BJ (cell line): ENCODE measurements at regions of chr1 and their contacts with region 1.

Region 1: DNA sequence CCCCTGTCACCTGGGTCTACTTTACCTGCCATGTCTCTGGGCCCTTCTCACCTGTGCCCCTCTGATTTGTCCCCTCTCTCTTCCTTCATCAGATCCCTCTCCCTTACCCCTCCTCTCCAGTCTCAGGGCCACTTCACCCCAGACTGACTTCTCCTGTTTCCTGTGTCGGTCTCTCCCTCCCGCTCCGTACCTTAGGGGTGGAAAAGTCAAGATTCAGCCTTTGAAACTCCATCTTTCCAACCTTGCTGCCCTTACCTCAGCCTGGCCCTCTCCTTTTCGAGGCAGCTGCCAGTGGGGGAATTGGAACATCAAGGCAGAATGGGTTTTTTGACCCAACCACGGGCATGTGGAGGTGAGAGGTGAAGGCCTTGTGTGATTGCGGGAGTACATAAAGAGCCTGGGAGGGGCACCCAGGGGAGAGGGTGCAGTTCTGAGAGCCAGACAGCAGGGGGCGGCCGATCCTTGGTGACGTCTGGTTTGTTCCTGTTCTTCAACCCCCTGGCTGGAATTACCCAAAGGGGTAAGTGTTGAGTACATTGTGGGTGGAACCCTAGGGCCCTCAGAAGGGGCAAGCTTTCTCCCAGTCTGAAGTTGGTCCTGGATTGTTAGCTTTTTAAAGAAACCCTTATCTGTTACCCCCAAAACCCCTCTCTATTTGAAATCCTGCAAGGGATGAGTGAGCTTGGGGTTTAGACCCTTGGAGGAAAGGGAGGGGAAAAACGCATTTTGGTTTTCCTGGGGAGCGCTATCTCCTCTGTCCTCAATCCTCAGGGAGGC is 12.3 kb upstream of the DMBX1 start:
- DNase-seq: no peak
- H3K4me3 ChIP-seq: no peak overlapping the region
- H3K27me3 ChIP-seq: peaks cover 35% of the 10 kb centered on the region
- CTCF ChIP-seq: peak; percentile 95

Region 2: GRCh38 chr1:46487818-46488218 is 10.5 kb after region 1 on chr1:
- CTCF ChIA-PET with region 1: interaction called, 20 read pairs
- POLR2A ChIA-PET with region 1: no interaction called
- DNase-seq: no peak
- H3K4me3 ChIP-seq: no peak overlapping the region
- H3K27me3 ChIP-seq: peaks cover 76% of the 10 kb centered on the region
- CTCF ChIP-seq: peak; percentile 23; the same call in 1 of the 2 replicates

Region 3: DNA sequence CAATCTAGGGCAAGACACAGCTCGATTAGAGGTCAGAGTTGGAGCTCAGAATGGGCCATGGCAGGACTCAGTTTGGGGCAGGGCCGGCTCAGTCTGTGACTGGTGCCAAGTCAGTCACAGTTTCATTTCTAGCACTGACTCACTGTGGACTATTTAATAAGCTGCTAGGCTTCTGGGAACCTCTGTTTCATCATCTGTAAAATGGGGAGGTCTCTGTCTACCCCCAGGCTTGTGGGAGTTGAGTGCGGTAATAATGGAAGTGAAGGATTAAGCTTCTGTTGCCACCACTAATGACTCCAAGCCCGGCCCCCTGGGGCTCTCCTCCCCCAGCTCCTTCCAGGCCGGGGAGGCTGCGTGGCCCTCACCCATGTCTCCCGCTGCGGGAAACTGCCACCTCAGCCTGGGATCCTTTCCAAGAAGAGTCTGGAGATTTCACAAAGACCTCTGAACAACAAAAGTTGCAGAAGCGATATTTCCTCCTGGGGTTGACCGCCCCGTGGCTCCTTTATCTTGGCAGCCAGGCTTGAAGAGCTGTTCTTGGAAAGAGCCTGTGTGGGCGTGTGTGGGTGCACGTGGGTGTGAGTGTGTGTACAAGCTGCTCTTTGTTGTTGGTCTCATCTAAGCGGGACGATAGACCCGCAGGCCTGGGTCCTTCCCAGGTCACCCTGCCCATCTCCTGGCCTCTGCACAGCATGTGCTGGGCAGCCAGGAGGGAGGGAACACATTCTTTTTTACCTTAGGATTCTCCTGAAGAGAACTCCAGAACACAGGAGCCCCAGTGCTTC is 45.0 kb after region 1 on chr1:
- CTCF ChIA-PET with region 1: interaction called, 176 read pairs
- POLR2A ChIA-PET with region 1: no interaction called
- DNase-seq: no peak
- H3K4me3 ChIP-seq: no peak overlapping the region
- H3K27me3 ChIP-seq: peaks cover 18% of the 10 kb centered on the region
- CTCF ChIP-seq: no peak

Region 4: GRCh38 chr1:46533179-46533864 is 56.0 kb after region 1 on chr1:
- CTCF ChIA-PET with region 1: interaction called, 176 read pairs
- POLR2A ChIA-PET with region 1: no interaction called
- DNase-seq: no peak
- H3K4me3 ChIP-seq: peak overlapping the region; percentile 23; the same call in 1 of the 2 replicates
- H3K27me3 ChIP-seq: peaks cover 24% of the 10 kb centered on the region
- CTCF ChIP-seq: no peak

Region 5: GRCh38 chr1:46547481-46548383 is 70.4 kb after region 1 on chr1:
- CTCF ChIA-PET with region 1: interaction called, 17 read pairs
- POLR2A ChIA-PET with region 1: no interaction called
- DNase-seq: no peak
- H3K4me3 ChIP-seq: no peak overlapping the region
- H3K27me3 ChIP-seq: peaks cover 32% of the 10 kb centered on the region
- CTCF ChIP-seq: peak; percentile 53